Activated naive CD4-positive, alpha-beta T cell treated with anti-CD3 and anti-CD28 coated beads, Interleukin-2, amount 10 ng/mL, durations not matched to agents 7 days and 5 days (primary cell): ENCODE measurements at regions of chr17 and their contacts with region 1.

Region 1: GRCh38 chr17:38333635-38334295 is 10.0 kb downstream of the GPR179 start:
- DNase-seq: peak; percentile 75
- H3K4me3 Mint-ChIP-seq: no peak overlapping the region
- H3K27ac Mint-ChIP-seq: no peak overlapping the region
- H3K4me1 Mint-ChIP-seq: no peaks in the 10 kb centered on the region
- H3K27me3 Mint-ChIP-seq: peaks cover 48% of the 10 kb centered on the region

Region 2: DNA sequence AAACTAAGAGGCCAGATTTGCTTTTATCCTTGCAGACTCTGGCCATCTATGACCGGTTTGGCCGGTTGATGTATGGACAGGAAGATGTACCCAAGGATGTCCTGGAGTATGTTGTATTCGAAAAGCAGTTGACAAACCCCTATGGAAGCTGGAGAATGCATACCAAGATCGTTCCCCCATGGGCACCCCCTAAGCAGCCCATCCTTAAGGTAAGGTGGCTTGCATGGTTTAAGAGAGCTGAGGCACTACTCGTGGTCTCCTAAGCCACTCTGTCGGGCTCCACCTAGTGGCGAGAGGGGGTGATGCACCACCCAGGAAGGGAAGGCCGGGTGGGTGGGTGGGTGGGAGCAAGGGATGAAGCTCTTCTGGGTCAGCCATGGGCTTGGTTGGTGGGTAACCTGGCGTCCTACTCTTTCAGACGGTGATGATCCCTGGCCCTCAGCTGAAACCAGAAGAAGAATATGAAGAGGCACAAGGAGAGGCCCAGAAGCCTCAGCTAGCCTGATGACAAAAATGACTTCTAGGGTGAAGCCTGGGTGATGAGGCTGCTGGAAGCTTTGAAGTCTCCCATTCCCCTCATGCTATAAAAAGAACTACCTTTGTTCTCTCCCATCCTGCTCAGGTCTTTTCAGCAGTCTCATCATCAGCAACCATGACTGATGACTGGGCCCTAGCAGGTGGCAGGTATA is 11.5 kb before region 1 on chr17:
- CTCF ChIA-PET with region 1: interaction called, 31 read pairs
- DNase-seq: peak; percentile 81
- H3K4me3 Mint-ChIP-seq: no peak overlapping the region
- H3K27ac Mint-ChIP-seq: no peak overlapping the region
- H3K4me1 Mint-ChIP-seq: peaks cover 6% of the 10 kb centered on the region
- H3K27me3 Mint-ChIP-seq: no peaks in the 10 kb centered on the region

Region 3: GRCh38 chr17:38421171-38421841 is 87.5 kb after region 1 on chr17:
- CTCF ChIA-PET with region 1: no interaction called
- DNase-seq: no peak
- H3K4me3 Mint-ChIP-seq: no peak overlapping the region
- H3K27ac Mint-ChIP-seq: no peak overlapping the region
- H3K4me1 Mint-ChIP-seq: peaks cover 2% of the 10 kb centered on the region
- H3K27me3 Mint-ChIP-seq: peaks cover 95% of the 10 kb centered on the region

Region 4: DNA sequence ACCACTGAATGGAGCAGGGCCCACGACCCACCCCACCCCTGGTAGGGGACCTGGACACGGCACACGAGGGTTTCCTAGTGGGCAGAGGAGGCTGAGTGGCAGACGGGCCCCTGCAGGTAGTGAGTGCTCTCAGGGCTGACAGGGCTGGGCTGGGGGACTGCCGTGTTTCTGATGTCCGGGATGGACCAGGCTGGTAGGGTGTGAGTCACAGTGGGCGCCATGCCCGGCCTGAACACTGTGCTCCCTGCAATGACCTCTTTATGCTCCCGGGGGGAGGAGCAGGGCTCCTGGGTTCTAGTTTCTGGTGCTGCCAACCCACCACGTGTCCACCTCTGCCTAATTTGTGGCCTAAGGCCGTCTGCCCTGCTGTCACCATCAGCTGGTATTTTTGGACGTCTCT is 120.8 kb after region 1 on chr17:
- CTCF ChIA-PET with region 1: no interaction called
- DNase-seq: no peak
- H3K4me3 Mint-ChIP-seq: no peak overlapping the region
- H3K27ac Mint-ChIP-seq: no peak overlapping the region
- H3K4me1 Mint-ChIP-seq: peaks cover 13% of the 10 kb centered on the region
- H3K27me3 Mint-ChIP-seq: peaks cover 87% of the 10 kb centered on the region

Region 5: DNA sequence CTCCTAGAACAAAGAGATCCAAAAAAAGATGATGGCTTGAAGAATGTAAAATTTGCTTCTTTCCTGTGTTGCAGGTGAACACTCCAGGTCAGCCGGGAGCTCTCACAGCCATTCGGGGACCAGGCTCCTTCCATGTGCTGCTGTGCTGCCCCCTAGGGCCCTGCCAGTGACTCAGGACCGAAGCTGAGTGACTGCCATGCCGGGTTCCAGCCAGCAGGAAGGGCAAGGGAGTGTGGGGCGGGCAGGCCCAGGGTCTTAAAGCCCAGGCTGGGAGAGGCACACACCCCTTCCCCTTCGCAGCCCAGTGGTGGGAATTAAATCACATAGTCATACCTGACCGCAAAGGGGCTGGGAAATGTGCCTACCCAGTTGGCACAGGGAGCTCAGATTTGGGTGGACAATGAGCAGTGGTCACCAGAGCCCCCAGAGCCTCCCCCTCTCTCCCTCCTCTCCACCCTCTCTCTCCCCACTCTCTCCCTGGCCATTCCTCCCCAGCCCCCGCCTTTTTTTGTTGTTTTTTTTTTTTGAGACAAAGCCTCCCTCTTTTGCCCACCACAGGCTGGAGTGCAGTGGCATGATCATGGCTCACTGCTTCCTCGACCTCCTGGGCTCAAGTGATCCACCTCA is 329.5 kb after region 1 on chr17:
- CTCF ChIA-PET with region 1: no interaction called
- DNase-seq: peak; percentile 68
- H3K4me3 Mint-ChIP-seq: no peak overlapping the region
- H3K27ac Mint-ChIP-seq: no peak overlapping the region
- H3K4me1 Mint-ChIP-seq: peaks cover 2% of the 10 kb centered on the region
- H3K27me3 Mint-ChIP-seq: peaks cover 70% of the 10 kb centered on the region